ENCODE measurements at regions of chr3 and their contacts with region 1.

Region 1: DNA sequence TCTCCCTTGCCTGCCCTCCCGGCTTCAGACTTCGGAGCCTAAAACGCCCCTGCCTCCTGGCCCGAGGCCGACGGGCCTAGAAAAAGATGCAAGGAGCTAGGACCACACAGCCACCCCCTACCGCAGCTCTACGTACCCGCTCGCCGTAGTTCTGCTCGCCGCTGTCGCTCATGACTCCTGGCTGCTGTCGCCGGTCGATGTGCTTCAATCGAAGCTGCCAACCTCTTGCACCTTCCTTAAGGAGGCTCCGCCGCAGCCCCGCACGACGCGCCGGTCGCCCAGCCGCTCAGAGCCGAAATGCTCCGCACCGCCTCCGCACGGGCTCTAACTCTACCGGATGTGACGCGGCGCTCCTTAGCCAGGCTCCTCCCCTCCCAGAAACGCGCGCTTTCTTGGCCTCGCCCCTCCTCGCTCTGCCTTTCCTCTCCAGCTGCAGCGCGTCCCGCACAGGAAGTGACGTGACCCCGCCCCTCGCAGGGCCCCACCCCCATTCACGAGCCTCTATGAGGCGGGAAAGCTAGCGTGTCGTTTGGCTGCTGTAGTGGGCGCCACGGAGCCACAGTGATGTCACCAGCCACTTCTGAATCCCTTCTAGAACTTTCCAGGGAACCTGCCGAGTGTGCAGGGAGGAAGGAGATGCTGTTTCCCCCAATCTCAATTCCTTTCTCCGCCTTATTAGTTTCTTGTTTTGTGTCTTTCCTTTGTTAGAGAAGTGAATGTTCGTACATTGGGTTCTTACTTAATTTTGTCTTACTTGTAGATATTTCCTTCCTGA is at the start of gene TRA2B:
- DNase-seq: peak; percentile 91

Region 2: DNA sequence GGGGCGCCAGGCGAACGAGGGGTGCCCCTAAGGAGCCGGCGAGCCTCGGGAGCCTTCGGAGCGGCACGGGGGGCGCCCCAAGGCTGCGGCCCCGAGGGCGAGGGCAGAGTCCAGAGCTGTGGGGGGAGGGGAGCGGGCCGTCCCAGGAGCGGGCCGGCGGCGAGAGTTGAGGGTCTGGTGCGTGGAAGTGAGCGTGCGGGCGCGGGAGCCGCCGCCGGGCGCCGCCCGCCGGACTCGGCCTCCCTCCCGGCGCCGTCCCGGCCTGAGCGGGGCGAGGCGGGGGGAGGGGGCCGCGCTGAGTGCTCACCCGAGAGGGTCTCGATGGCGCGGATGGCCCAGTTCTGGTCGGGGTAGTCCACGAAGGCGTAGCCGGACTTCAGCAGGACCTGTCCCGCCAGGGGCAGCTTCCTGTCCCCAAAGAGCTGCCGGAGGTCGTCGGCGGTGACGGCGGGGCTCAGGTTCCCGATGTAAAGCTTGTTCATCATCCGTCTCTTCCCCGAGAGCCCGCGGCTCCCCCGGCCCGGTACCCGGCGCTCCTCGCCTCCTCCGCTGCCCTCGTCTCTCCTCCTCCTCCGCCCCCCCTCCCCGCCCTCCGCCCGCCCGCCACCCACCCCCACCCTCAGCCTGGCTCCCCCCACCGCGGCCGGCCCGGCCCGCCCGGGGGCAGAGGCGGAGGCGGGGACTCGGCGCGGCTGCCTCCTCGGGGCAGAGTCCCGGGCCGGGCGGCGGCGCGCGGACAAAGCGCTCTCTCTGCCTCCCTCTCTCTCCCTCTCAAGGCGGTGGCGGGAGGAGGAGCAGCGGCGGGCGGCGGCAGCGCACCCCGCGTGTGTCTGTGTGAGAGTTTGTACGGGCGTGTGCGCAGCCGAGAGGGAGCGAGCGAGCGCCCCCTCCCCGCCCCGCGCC is 113.1 kb before region 1 on chr3 and contains the start of gene IGF2BP2:
- CTCF ChIA-PET with region 1: interaction called, 4 read pairs
- POLR2A ChIA-PET with region 1: interaction called, 33 read pairs
- DNase-seq: peak; percentile 47

Region 3: GRCh38 chr3:185912929-185913901 is 24.7 kb before region 1 on chr3:
- CTCF ChIA-PET with region 1: no interaction called
- POLR2A ChIA-PET with region 1: interaction called, 11 read pairs
- DNase-seq: no peak

Region 4: DNA sequence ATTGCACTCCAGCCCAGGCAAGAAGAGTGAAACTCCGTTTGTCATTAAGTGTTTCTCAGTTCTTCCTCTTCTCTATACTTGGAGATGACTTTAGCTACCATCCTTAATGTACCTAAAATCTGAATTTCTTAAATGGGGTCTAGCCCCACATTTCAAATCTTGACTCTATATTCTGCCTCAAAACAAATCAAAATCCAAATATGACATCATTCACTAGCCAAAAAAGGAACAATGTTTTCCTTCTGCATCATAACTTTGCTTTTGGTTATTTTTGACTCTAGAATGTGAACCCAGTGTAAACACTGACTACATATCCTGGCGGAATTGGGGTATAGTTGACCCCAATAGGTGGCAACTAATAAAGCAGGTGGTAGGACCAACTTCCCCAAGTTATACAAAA is 14.6 kb before region 1 on chr3:
- CTCF ChIA-PET with region 1: interaction called, 11 read pairs
- POLR2A ChIA-PET with region 1: interaction called, 27 read pairs
- DNase-seq: no peak

Measured in HEK293T (cell line).